H1 (cell line): ENCODE measurements at regions of chr5 and their contacts with region 1.

Region 1: DNA sequence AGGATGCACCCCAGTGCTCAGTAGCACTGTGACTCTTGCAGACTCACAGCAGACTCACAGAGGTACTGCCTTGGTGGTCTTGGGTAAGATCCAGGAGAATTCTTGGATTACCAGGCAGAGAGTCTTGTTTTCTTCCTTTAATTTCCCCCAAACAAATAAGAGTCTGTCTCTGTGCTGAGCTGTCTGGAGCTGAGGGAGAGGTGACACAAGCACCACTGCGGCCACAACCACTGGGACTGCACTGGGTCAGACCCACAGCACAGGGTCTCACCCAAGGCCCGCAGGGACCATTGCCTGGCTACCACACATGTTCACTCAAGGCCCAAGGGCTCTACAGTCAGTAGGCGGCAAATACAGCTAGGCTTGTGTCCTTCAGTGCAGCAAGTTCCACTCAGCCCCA is 11.4 kb upstream of the YTHDC2 start:
- DNase-seq: no peak
- H3K4me3 ChIP-seq: no peak overlapping the region
- H3K27ac ChIP-seq: no peak overlapping the region
- H3K4me1 ChIP-seq: no peaks in the 10 kb centered on the region
- H3K27me3 ChIP-seq: no peaks in the 10 kb centered on the region
- CTCF ChIP-seq: no peak
- EP300 ChIP-seq: no peak
- POLR2A ChIP-seq: no peak
- RAD21 ChIP-seq: no peak

Region 2: DNA sequence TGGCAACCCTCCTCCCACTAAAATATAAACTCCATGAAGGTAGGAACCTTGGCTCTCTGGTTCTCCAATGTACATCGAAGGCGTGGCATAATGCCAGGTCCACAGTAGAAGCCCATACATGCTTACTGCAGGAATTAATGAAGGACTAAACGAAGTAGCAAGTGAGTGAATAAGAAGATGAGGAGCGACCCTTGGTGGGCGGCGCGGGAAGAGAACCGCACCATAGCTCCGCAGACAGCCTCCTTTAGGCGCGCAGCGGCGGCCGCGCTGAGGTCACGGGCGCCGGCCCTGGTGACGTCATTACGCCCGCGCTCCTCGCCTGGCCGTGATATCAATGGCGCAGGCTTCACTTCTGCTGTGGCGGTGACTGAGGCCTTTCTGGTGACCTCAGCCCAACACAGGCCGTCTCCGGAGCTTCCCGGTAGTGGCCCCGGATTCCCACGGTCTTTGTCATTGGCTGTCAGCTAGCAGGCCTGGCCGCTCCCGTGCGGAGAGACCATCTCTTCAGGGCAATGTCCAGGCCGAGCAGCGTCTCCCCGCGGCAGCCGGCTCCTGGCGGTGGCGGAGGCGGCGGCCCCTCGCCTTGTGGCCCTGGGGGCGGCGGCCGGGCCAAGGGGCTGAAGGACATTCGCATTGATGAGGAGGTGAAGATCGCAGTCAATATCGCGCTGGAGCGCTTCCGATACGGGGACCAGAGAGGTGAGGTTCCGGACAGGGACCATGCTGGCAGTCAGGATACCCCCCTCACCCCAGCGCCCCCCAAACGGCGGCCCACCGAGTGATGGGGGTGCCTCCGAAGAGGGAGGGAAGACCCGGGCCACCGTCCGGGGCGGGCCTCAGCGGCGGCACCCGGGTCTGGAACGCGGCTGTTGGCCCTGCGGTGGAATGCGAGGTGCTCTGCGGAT is 11.6 kb after region 1 on chr5 and contains the start of gene YTHDC2:
- CTCF ChIA-PET with region 1: interaction called, 14 read pairs
- POLR2A ChIA-PET with region 1: interaction called, 6 read pairs
- DNase-seq: peak; percentile 51 to 91
- H3K4me3 ChIP-seq: peak within 1 kb of the TSS; percentile 55 to 78 (median 72)
- H3K27ac ChIP-seq: peak within 1 kb of the TSS; percentile 62; the same call in 1 of the 2 replicates
- H3K4me1 ChIP-seq: peaks cover 0 to 5% (median 2%) of the 10 kb centered on the region in 4 experiments; a peak in 3 of 7 replicates
- H3K27me3 ChIP-seq: no peaks in the 10 kb centered on the region
- CTCF ChIP-seq: peak; percentile 59 to 79 (median 66)
- EP300 ChIP-seq: no peak
- POLR2A ChIP-seq: peak; percentile 55 to 89
- RAD21 ChIP-seq: peak; percentile 84 to 85
- total RNA-seq, gene YTHDC2: 19.2 and 20.1 TPM in 2 replicates